H1 (cell line): ENCODE measurements at regions of chr2 and their contacts with region 1.

Region 1: GRCh38 chr2:232444409-232445148 is 11.4 kb upstream of the ALPI start:
- DNase-seq: peak; percentile 44 to 82
- H3K4me3 ChIP-seq: no peak overlapping the region
- H3K27ac ChIP-seq: no peak overlapping the region
- H3K4me1 ChIP-seq: peaks cover 0 to 12% (median 5%) of the 10 kb centered on the region in 4 experiments; a peak in 5 of 7 replicates
- H3K27me3 ChIP-seq: no peaks in the 10 kb centered on the region; a peak in 2 of 7 replicates
- CTCF ChIP-seq: peak; percentile 70 to 88 (median 80)
- EP300 ChIP-seq: no peak
- POLR2A ChIP-seq: no peak
- RAD21 ChIP-seq: peak in 1 of 2 experiments; percentile 38; a peak in 2 of 4 replicates

Region 2: GRCh38 chr2:231970461-231970860 is 474.1 kb before region 1 on chr2:
- CTCF ChIA-PET with region 1: no interaction called
- POLR2A ChIA-PET with region 1: no interaction called
- DNase-seq: no peak
- H3K4me3 ChIP-seq: no peak overlapping the region
- H3K27ac ChIP-seq: no peak overlapping the region
- H3K4me1 ChIP-seq: no peaks in the 10 kb centered on the region
- H3K27me3 ChIP-seq: no peaks in the 10 kb centered on the region
- CTCF ChIP-seq: no peak
- EP300 ChIP-seq: no peak
- POLR2A ChIP-seq: no peak
- RAD21 ChIP-seq: no peak

Region 3: DNA sequence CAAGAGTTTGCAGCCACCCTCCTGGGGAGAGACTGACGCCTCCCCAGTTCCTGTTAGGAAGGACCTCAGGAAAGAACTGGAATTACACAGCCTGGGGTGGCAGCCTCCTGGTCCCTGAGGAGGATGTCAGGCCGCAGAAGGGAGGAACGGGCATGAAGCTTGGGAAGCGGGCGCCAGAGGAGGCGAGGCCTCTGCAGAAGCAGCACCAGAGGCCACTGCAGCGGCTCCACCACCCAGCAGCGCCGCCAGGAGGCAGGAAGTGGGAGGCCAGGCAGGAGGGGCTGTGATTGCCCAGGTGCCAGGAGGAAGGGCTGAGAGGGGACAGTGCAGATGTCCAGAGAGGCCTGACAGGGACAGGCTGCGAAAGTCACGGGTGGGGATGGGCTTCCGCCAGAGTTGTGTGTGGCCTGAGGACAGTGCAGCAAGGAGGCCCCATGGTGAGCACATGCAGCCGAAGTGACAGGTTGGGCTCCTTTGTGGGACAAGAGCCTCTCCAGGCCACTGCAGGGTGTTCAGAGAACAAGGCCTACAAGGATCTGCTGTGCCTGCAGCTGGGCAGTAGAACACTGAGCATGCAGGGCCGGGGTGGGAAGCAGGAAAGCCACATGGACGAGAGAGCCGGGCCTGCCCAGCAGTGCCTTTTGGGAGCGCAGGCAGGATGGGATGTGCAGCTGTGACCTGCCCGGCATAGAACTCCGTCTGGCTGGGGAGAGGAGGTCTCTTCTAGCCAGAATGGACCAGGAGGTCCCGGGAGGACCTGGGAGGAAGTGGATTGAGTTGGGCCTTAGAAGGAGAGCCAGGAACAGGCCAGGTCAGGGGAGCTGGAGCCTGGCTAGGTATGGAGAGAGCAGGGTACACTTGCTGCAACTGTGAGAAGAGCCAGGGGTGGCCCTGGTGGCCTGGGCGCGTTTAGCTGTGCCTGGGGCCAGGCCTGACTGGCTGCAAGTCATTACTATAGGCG is 105.2 kb before region 1 on chr2:
- CTCF ChIA-PET with region 1: interaction called, 67 read pairs
- POLR2A ChIA-PET with region 1: no interaction called
- DNase-seq: peak in 1 of 2 experiments; percentile 89
- H3K4me3 ChIP-seq: no peak overlapping the region
- H3K27ac ChIP-seq: no peak overlapping the region
- H3K4me1 ChIP-seq: no peaks in the 10 kb centered on the region; a peak in 1 of 7 replicates
- H3K27me3 ChIP-seq: no peaks in the 10 kb centered on the region
- CTCF ChIP-seq: peak in 2 of 3 experiments; percentile 82 to 87; a peak in 3 of 4 replicates
- EP300 ChIP-seq: no peak
- POLR2A ChIP-seq: no peak
- RAD21 ChIP-seq: peak; percentile 54 to 62

Region 4: DNA sequence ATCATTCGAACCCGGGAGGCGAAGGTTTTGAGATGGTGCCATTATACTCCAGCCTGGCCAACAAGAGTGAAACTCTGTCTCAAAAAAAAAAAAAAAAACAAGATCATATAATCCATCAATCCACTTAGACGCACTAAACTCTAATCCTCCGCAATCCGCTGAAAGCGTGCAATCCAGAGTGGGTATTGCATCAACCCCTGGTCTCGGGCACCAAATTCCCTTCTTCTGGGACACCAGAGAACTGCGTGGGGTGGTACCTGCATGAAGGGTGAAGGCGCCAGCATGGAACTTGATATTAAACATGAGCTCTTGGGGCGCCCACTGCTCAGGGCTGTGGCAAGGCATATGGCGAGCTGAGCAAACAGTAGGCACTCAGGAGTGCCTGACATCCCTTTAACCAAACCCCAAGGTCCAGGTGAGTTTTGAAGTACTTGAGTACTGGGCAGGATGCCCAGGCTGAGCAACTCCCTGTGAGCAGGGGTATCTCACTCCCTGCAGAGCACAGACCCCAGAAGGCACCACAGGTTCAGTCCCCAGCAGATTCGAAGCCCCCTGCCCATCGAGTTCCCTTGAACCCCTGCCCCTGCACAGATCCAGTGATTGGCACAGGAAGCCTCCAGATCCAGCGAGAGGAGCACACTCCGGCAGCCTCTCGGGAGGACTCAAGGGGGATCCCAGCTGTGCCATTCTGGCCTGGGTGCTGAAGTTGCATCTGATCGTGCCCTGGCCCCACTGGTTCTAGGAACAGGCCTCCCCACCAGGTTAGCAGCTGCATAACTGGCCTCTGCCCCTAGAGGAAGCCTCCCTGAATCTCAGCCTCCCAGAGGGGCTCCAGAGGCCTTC is 19.3 kb after region 1 on chr2:
- CTCF ChIA-PET with region 1: interaction called, 19 read pairs
- POLR2A ChIA-PET with region 1: no interaction called
- DNase-seq: no peak
- H3K4me3 ChIP-seq: no peak overlapping the region
- H3K27ac ChIP-seq: no peak overlapping the region
- H3K4me1 ChIP-seq: peaks cover 0 to 2% (median 0%) of the 10 kb centered on the region in 4 experiments; a peak in 1 of 7 replicates
- H3K27me3 ChIP-seq: no peaks in the 10 kb centered on the region
- CTCF ChIP-seq: no peak
- EP300 ChIP-seq: no peak
- POLR2A ChIP-seq: no peak
- RAD21 ChIP-seq: no peak

Region 5: DNA sequence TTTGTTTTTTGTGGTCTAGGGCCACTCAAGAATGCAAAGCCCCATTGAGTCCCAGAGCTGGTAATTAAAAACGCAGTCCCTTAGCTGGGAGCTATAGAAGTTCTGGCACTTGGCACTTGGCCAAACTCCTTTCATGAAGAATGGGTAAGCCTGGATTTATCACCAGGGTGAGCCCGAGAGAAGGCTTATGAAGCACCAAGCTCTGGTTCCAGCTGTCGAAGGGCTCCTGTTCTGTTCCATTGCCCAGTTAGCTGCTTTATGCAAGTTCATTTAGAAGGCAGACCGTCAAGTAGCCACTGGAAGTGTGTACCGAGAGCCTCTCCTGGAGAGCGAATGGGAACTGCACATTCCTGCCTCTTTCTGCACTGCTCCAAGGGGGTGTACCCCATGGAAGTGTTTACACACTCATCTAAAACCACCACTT is 28.9 kb after region 1 on chr2:
- CTCF ChIA-PET with region 1: interaction called, 16 read pairs
- POLR2A ChIA-PET with region 1: no interaction called
- DNase-seq: no peak
- H3K4me3 ChIP-seq: no peak overlapping the region
- H3K27ac ChIP-seq: no peak overlapping the region
- H3K4me1 ChIP-seq: no peaks in the 10 kb centered on the region; a peak in 1 of 7 replicates
- H3K27me3 ChIP-seq: no peaks in the 10 kb centered on the region; a peak in 1 of 7 replicates
- CTCF ChIP-seq: no peak
- EP300 ChIP-seq: no peak
- POLR2A ChIP-seq: no peak
- RAD21 ChIP-seq: no peak

Region 6: DNA sequence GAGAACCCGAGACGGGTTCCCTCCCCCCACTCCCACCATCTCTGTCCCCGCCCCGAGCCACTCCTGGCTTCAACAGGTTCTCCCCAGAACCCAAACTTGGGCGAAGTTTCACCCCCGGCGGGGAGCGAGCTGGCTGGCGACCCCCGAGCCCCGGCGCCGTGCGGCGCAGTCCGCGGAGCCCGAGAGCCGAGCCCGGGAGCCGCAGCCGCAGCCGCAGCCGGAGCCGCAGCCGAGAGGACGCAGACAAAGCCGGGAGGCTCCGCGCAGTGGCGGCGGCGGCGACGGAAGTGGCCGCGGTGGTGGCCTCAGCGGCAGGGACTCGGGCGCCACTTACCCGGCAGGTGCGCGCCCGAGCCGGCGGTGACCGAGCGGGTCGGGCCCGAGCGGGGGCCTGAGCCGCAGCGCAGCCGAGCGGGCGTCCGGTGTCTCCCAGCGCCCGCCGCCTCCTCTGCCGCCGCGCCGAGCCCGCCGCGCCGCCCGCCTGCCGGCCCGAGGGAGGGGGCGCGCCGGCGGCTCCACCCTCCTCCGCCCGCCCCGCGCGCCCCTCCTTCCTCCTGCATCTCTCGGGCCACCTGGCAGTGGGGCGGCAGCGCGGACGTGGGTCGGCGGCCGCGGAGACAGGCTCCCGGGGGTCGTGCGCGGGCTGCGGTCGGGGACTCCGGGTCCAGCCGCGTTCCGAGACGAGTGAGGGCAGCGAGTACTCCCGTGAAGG is 43.0 kb after region 1 on chr2 and contains the start of gene ECEL1:
- CTCF ChIA-PET with region 1: interaction called, 17 read pairs
- POLR2A ChIA-PET with region 1: no interaction called
- DNase-seq: peak in 1 of 2 experiments; percentile 71
- H3K4me3 ChIP-seq: peak within 1 kb of the TSS; percentile 26 to 62 (median 28)
- H3K27ac ChIP-seq: no peak within 1 kb of the TSS
- H3K4me1 ChIP-seq: peaks cover 0 to 40% (median 22%) of the 10 kb centered on the region in 4 experiments; a peak in 6 of 7 replicates
- H3K27me3 ChIP-seq: peaks cover 35 to 58% (median 50%) of the 10 kb centered on the region in 4 experiments
- CTCF ChIP-seq: no peak
- EP300 ChIP-seq: no peak
- POLR2A ChIP-seq: no peak
- RAD21 ChIP-seq: no peak
- total RNA-seq, gene ECEL1: 6.5 and 7.7 TPM in 2 replicates

Region 7: DNA sequence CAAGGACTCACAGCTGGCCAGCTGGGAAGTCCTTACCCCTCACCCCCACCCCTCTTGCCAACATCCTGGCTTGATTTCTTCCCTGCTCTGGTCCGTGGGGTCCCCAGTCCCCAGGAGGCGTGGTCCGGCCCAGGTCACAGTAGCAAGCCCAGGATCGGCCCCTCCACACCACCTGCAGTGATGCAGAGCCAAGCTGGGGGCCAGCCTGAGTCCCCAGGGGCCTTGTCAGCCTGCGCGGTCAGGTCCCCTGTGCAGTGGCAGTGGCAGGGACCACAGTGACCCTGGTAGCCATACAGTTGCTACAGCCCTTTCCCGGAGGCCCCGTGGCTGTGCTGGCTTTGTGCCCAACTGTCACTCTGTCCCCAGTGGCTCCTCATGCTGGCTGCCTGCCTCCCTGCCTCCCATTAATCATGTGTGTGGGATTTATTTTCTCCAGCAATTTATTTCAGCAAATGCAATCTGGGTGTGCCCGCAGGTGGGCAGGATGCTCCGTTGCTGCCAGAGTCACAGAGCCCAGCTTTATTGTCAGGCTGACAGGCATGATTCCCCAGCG is 66.8 kb after region 1 on chr2:
- CTCF ChIA-PET with region 1: interaction called, 14 read pairs
- POLR2A ChIA-PET with region 1: no interaction called
- DNase-seq: no peak
- H3K4me3 ChIP-seq: no peak overlapping the region
- H3K27ac ChIP-seq: no peak overlapping the region
- H3K4me1 ChIP-seq: peaks cover 0 to 10% (median 3%) of the 10 kb centered on the region in 4 experiments; a peak in 2 of 7 replicates
- H3K27me3 ChIP-seq: peaks cover 0 to 10% (median 4%) of the 10 kb centered on the region in 4 experiments; a peak in 3 of 7 replicates
- CTCF ChIP-seq: no peak
- EP300 ChIP-seq: no peak
- POLR2A ChIP-seq: no peak
- RAD21 ChIP-seq: no peak

Region 8: DNA sequence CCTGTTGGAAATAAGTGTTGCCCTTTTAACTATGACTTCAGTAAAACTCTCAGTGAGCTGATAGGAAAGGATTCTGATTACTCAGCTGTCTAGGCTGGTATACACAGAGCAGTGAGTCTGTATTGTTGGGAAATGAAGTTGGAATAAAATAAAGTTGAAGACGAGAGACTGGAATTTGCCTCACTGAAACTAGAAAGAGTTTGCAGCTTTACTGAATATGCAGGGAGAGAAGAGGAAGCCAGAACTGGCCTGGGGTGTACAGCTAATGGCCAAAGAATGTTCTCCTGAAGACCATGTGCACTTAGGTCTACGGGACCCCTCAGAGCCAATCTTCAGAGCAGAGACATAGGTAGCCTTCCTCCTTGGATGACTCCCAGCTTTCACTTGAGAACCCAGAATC is 132.4 kb after region 1 on chr2:
- CTCF ChIA-PET with region 1: no interaction called
- POLR2A ChIA-PET with region 1: no interaction called
- DNase-seq: no peak
- H3K4me3 ChIP-seq: no peak overlapping the region
- H3K27ac ChIP-seq: no peak overlapping the region
- H3K4me1 ChIP-seq: no peaks in the 10 kb centered on the region
- H3K27me3 ChIP-seq: no peaks in the 10 kb centered on the region
- CTCF ChIP-seq: no peak
- EP300 ChIP-seq: no peak
- POLR2A ChIP-seq: no peak
- RAD21 ChIP-seq: no peak

Region 9: GRCh38 chr2:232652505-232652851 is 207.9 kb after region 1 on chr2:
- CTCF ChIA-PET with region 1: no interaction called
- POLR2A ChIA-PET with region 1: no interaction called
- DNase-seq: no peak
- H3K4me3 ChIP-seq: no peak overlapping the region
- H3K27ac ChIP-seq: no peak overlapping the region
- H3K4me1 ChIP-seq: no peaks in the 10 kb centered on the region
- H3K27me3 ChIP-seq: no peaks in the 10 kb centered on the region
- CTCF ChIP-seq: no peak
- EP300 ChIP-seq: no peak
- POLR2A ChIP-seq: no peak
- RAD21 ChIP-seq: no peak